CD4-positive, alpha-beta T cell (primary cell): ENCODE measurements at regions of chr5 and their contacts with region 1.

Region 1: GRCh38 chr5:32709781-32710549 is 1.2 kb upstream of the NPR3 start:
- DNase-seq: peak in 6 of 14 experiments; percentile 9 to 42 (median 21)
- ATAC-seq: no peak
- H3K4me3 ChIP-seq: peak overlapping the region; percentile 49
- H3K4me3 Mint-ChIP-seq: peak overlapping the region; percentile 75
- H3K27ac ChIP-seq: no peak overlapping the region
- H3K27ac Mint-ChIP-seq: no peak overlapping the region
- H3K4me1 ChIP-seq: peaks cover 27% of the 10 kb centered on the region
- H3K4me1 Mint-ChIP-seq: peaks cover 26% of the 10 kb centered on the region
- H3K27me3 ChIP-seq: peaks cover 48 to 53% of the 10 kb centered on the region in 2 experiments
- H3K27me3 Mint-ChIP-seq: peaks cover 70% of the 10 kb centered on the region
- CTCF ChIP-seq: no peak

Region 2: DNA sequence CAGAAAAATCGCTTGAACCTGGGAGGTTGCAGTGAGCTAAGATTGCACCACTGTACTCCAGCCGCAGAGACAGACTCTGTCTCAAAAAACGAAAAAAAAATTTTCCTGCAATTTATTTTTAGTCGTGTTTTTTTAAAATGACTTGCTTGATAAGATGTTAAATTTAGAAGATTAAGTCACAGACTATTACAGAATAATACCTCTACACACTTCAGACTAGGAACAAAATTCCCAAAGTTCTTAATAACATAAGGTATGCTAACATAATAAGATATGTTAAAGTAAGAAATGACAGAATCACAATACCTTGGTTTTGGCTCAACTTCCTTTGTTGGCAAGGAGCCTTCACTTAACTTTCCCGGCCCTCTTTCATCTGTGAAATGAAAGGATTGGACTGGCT is 58.3 kb before region 1 on chr5:
- CTCF ChIA-PET with region 1: no interaction called
- POLR2A ChIA-PET with region 1: no interaction called
- intact Hi-C with region 1: no loop called
- DNase-seq: no peak
- ATAC-seq: no peak
- H3K4me3 ChIP-seq: no peak overlapping the region
- H3K4me3 Mint-ChIP-seq: no peak overlapping the region
- H3K27ac ChIP-seq: no peak overlapping the region
- H3K27ac Mint-ChIP-seq: no peak overlapping the region
- H3K4me1 ChIP-seq: no peaks in the 10 kb centered on the region
- H3K4me1 Mint-ChIP-seq: no peaks in the 10 kb centered on the region
- H3K27me3 ChIP-seq: no peaks in the 10 kb centered on the region
- H3K27me3 Mint-ChIP-seq: peaks cover 5% of the 10 kb centered on the region
- CTCF ChIP-seq: no peak

Region 3: DNA sequence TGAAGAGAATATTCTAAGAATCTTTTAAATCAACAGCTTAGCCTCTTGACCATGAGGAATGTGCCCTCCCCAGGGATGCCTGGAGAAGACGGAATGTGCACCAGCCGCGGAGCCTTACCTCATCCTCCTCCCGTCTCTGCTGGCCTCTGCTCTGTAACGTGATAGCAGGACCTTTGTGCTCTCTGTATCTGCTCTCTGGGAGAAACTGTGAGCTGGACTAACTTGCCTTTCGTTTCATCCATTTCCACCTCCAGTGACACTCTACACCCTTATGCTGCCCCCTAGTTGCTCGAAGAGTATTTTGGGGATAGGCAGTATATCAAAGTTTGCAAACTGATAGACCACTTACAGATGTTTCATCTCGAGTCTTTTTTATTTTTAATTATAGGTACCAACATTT is 142.6 kb after region 1 on chr5:
- CTCF ChIA-PET with region 1: no interaction called
- POLR2A ChIA-PET with region 1: no interaction called
- intact Hi-C with region 1: loop called in 1 of 2 experiments (anchors 10 kb)
- DNase-seq: no peak
- ATAC-seq: no peak
- H3K4me3 ChIP-seq: no peak overlapping the region
- H3K4me3 Mint-ChIP-seq: no peak overlapping the region
- H3K27ac ChIP-seq: no peak overlapping the region
- H3K27ac Mint-ChIP-seq: no peak overlapping the region
- H3K4me1 ChIP-seq: no peaks in the 10 kb centered on the region
- H3K4me1 Mint-ChIP-seq: no peaks in the 10 kb centered on the region
- H3K27me3 ChIP-seq: no peaks in the 10 kb centered on the region
- H3K27me3 Mint-ChIP-seq: no peaks in the 10 kb centered on the region
- CTCF ChIP-seq: no peak